Activated T-helper 1 cell treated with anti-CD3 and anti-CD28 coated beads, Interleukin-12 subunit alpha, Interleukin-12 subunit beta, Interleukin-2, Interleukin-4 antibody, amounts not matched to agents 30 ng/mL and 10 ng/mL and 1 ng/mL, durations not matched to agents 14 hours and 24 hours and 36 hours (primary cell): ENCODE measurements at regions of chr2 and their contacts with region 1.

Region 1: GRCh38 chr2:130824492-130825061 is 12.1 kb upstream of the ARHGEF4 start:
- DNase-seq: peak; percentile 72
- H3K4me3 Mint-ChIP-seq: peak overlapping the region; percentile 63
- H3K27ac Mint-ChIP-seq: peak overlapping the region; percentile 89
- H3K4me1 Mint-ChIP-seq: peaks cover 15% of the 10 kb centered on the region
- H3K27me3 Mint-ChIP-seq: peaks cover 20% of the 10 kb centered on the region

Region 2: DNA sequence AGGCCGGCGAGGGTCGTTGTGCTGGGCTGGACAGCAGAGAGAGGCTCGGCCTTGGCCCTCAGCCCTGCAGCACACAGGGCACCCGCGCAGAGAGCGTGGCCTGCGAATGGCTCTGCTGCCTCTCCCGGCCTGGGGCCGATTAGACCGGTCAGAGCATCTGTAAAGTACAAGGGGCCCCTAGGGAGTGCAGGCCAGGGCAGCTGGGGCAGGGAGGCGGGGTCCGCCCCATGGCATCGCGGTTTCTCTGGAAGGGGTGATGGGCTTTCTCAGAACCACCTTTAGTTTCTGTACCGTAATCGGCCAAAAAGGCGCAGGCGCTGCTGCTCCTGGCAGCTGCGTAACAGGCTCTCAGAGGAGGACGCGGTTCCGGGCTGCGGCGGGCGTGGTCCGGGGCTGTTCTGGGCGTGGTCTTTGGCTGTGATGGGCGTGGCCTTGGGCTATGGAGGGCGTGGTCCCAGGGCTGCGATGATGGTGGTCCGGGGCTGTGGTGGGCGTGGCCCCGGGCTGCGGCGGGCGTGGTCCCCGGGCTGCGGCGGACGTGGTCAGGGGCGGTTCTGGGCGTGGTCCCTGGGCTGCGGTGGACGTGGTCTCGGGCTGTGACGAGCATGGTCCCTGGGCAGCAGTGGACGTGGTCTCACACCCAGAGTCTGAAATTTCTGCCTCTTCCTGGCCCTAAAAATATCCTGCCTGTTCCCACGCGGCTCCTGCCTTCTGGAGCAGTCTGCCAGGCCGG is 97.1 kb before region 1 on chr2:
- intact Hi-C with region 1: loop called (anchors 1 kb)
- DNase-seq: peak; percentile 84
- H3K4me3 Mint-ChIP-seq: peak overlapping the region; percentile 76
- H3K27ac Mint-ChIP-seq: peak overlapping the region; percentile 57
- H3K4me1 Mint-ChIP-seq: peaks cover 12% of the 10 kb centered on the region
- H3K27me3 Mint-ChIP-seq: peaks cover 12% of the 10 kb centered on the region

Region 3: DNA sequence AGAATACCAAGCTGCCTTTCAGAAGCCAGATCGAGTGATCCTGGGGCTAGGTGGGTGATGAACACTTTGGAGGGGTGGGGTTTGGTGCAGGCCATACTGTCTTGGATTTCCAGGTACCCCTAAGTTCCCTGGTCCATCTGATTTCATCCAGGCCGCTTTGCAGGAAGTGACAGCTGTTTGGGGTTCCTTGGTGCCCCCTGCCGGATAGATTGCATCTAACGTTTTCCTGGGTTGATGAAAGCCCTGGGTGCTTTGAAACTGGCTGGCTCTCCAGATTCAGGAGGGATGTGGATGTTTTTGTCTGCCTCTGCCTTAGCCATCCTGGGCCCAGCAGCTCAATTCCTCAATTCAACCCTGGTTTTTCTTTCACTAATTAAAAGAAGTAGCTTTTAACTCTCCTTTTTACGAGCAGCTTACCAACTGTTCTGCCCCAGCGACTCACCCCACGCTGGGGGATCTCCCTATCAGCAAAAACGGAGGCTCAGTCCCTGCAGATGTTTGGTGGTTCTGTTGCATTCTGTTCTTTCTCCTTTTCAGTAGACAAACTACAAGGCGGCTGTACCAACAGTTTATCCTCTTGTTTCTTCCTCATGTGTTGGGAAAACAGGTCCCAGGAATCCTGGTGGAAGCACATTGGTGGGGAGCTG is 49.2 kb after region 1 on chr2:
- intact Hi-C with region 1: loop called (anchors 1 kb)
- DNase-seq: peak; percentile 58
- H3K4me3 Mint-ChIP-seq: no peak overlapping the region
- H3K27ac Mint-ChIP-seq: no peak overlapping the region
- H3K4me1 Mint-ChIP-seq: no peaks in the 10 kb centered on the region
- H3K27me3 Mint-ChIP-seq: peaks cover 9% of the 10 kb centered on the region

Region 4: DNA sequence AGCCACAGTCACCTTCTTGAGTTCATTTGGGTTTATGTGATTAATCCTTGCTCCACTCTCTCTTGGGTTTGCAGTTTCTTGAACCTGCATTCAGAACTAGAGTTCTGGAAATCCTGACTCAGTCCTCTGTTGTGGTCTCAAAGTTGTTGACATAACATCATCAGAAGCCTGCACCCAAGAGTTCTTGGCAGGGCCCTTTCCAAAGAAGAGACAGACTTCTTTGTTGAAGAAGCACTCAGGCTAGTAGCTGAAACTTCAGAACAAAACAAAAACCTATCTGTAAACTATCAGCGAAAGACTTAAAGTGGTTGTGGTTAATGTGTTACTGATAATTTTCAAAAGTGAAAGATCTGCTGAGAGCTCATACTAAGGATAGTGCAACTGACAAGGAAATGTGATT is 147.8 kb after region 1 on chr2:
- intact Hi-C with region 1: loop called (anchors 1 kb)
- DNase-seq: peak; percentile 16
- H3K4me3 Mint-ChIP-seq: no peak overlapping the region
- H3K27ac Mint-ChIP-seq: peak overlapping the region; percentile 57
- H3K4me1 Mint-ChIP-seq: peaks cover 16% of the 10 kb centered on the region
- H3K27me3 Mint-ChIP-seq: peaks cover 13% of the 10 kb centered on the region

Region 5: GRCh38 chr2:131093006-131093695 is 268.6 kb after region 1 on chr2 and contains the start of gene FAM168B:
- intact Hi-C with region 1: loop called (anchors 2 kb)
- DNase-seq: peak; percentile 89
- H3K4me3 Mint-ChIP-seq: peak within 1 kb of the TSS; percentile 93
- H3K27ac Mint-ChIP-seq: peak within 1 kb of the TSS; percentile 95
- H3K4me1 Mint-ChIP-seq: peaks cover 18% of the 10 kb centered on the region
- H3K27me3 Mint-ChIP-seq: no peaks in the 10 kb centered on the region
- total RNA-seq, gene FAM168B: 79.0 and 79.1 TPM in 2 replicates